ENCODE measurements at regions of chr16 and their contacts with region 1.

Region 1: GRCh38 chr16:75622761-75623605 is at the start of gene ADAT1:
- DNase-seq: peak; percentile 97
- ATAC-seq: peak; percentile 95 to 98
- H3K4me3 ChIP-seq: peak within 1 kb of the TSS; percentile 71 to 86 (median 78)
- H3K27ac ChIP-seq: peak within 1 kb of the TSS; percentile 86 to 93 (median 90)
- H3K4me1 ChIP-seq: peaks cover 19 to 20% of the 10 kb centered on the region in 2 donors
- H3K27me3 ChIP-seq: no peaks in the 10 kb centered on the region
- CTCF ChIP-seq: peak in 1 of 5 experiments; percentile 3
- POLR2A ChIP-seq: peak; percentile 85 to 86
- total RNA-seq, gene ADAT1: 14.7 to 44.8 (median 19.0) TPM

Region 2: DNA sequence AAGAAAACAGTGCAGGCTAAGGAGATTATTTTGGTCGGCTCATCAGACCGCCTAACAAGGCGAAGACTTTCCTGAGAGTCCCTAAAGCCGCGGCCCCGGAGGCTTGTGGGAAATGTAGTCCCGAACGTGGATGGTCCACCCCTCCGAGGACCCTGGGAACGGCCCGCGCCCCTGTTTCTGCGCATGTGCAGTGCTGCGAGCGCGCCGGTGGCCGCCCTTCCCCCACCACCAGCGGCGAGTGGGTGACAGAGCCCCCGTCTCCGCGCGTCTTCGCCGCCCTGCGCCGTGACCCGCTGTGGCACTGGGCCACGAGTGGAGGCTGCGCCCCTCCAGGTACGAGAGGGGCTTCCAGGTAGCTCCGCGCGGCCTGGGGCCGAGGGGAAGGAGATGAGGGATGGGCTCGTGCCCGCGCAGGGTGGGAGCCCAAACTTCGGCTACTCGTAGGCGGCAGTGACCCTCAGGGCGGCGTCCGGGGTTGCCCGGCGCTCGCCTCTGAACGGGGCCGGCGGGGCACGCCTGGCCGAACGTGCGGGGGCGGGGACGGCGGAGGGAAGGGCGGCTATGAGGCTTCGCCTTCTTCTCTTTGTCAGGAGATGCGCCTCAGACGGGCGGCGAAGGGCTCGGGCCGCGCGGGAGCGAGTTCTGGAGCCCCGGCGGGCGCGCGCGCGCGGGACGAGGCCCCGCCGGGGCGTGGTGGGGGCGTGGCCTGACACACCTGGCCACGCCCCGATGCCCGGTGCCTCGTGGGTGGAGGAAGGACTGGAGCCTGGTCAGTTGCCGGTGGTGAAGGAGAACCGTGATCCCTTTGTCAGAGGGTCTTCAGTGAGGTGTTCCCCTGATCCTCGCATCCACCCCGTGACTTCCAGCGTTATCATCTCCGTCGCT is 474.4 kb before region 1 on chr16 and contains the start of gene ZFP1:
- in situ Hi-C with region 1: no loop called
- intact Hi-C with region 1: loop called (anchors 2 kb)
- DNase-seq: peak; percentile 92 to 95
- ATAC-seq: peak; percentile 97 to 98
- H3K4me3 ChIP-seq: peak within 1 kb of the TSS; percentile 80 to 100 (median 95)
- H3K27ac ChIP-seq: peak within 1 kb of the TSS; percentile 97 to 100 (median 98)
- H3K4me1 ChIP-seq: peaks cover 3 to 8% of the 10 kb centered on the region in 2 donors
- H3K27me3 ChIP-seq: no peaks in the 10 kb centered on the region
- CTCF ChIP-seq: no peak
- POLR2A ChIP-seq: peak; percentile 63 to 74
- total RNA-seq, gene ZFP1: 4.1 to 11.0 (median 6.5) TPM

Region 3: GRCh38 chr16:75519881-75520280 is 103.1 kb before region 1 on chr16:
- in situ Hi-C with region 1: no loop called
- intact Hi-C with region 1: loop called (anchors 1 kb)
- DNase-seq: no peak
- ATAC-seq: no peak
- H3K4me3 ChIP-seq: no peak overlapping the region
- H3K27ac ChIP-seq: no peak overlapping the region
- H3K4me1 ChIP-seq: peaks cover 0 to 6% of the 10 kb centered on the region in 2 donors
- H3K27me3 ChIP-seq: no peaks in the 10 kb centered on the region
- CTCF ChIP-seq: no peak
- POLR2A ChIP-seq: no peak

Region 4: DNA sequence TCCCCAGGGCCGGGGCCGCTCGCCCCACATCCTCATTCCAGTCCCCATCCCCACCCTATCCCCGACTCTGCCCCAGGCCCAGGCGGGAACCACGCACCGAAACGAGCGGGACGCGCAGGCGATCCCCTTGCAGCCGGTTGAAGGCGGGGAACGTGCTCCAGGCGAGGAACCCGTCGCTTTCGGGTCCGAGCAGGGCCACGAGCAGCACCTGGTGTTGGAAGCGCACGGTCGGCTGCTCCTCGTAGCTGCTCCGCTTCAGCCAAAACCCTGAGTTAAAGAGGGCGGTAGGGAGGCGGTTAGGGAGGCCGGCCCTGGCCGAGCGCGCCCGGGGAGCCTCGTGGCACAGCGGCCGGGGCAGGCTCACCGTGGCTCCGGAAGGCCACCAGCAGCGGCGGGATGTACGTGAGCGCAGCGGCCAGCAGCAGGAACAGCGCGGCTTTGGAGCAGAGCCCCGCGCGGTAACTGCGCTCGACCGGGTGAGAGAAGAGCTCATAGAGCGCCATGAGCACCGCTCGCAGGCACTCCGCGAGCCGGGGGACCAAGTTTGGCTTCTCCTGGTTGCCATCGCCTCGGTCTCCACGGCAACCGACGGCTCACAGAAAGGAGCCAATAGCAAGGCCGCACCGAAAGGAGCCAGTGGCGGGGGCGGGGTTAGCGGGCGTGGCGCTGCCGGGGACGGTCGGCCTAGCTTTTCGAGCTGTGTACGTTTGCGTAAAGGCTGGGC is 67.1 kb before region 1 on chr16 and contains the start of gene TMEM231:
- in situ Hi-C with region 1: loop called in 1 of 4 experiments (anchors 10 kb)
- intact Hi-C with region 1: loop called (anchors 2 kb)
- DNase-seq: peak; percentile 95
- ATAC-seq: peak; percentile 93
- H3K4me3 ChIP-seq: peak within 1 kb of the TSS; percentile 76 to 84 (median 82)
- H3K27ac ChIP-seq: peak within 1 kb of the TSS; percentile 76 to 87 (median 82)
- H3K4me1 ChIP-seq: peaks cover 8 to 14% of the 10 kb centered on the region in 2 donors
- H3K27me3 ChIP-seq: no peaks in the 10 kb centered on the region
- CTCF ChIP-seq: no peak
- POLR2A ChIP-seq: peak; percentile 39 to 52
- total RNA-seq, gene TMEM231: 0.76 to 2.3 (median 1.7) TPM

Region 5: GRCh38 chr16:75566040-75566810 is 56.8 kb before region 1 on chr16 and contains the start of gene GABARAPL2:
- in situ Hi-C with region 1: loop called in 1 of 4 experiments (anchors 10 kb)
- intact Hi-C with region 1: loop called (anchors 2 kb)
- DNase-seq: peak; percentile 51 to 65
- ATAC-seq: peak; percentile 91 to 95
- H3K4me3 ChIP-seq: peak within 1 kb of the TSS; percentile 89 to 98 (median 96)
- H3K27ac ChIP-seq: peak within 1 kb of the TSS; percentile 81 to 92 (median 86)
- H3K4me1 ChIP-seq: peaks cover 34 to 54% of the 10 kb centered on the region in 2 donors
- H3K27me3 ChIP-seq: no peaks in the 10 kb centered on the region
- CTCF ChIP-seq: no peak
- POLR2A ChIP-seq: peak; percentile 90 to 91
- total RNA-seq, gene GABARAPL2: 92.2 to 137 (median 117) TPM

Region 6: DNA sequence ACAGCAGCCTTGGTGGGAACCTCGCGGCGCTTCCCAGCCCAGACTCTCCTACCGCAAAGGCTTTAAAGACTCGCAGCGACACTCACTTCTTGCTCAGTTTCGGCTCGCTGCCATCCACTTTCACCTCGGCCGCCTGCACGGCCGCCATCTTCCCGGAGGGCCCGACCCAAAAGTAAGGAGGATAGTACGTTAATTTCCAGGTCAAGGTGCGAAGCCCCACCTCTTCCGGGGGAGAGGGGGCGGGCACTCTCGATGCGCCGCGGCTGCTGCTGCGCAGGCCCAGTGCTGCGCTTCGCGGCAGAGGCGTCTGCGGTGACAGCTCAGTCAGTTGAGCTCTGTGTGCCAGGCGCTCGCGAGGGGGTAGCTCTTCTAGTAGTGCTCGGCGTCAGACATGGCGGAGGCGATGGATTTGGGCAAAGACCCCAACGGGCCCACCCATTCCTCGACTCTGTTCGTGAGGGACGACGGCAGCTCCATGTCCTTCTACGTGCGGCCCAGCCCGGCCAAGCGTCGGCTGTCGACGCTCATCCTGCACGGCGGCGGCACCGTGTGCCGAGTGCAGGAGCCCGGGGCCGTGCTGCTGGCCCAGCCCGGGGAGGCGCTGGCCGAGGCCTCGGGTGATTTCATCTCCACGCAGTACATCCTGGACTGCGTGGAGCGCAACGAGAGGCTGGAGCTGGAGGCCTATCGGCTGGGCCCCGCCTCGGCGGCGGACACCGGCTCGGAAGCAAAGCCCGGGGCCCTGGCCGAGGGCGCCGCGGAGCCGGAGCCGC is 24.7 kb after region 1 on chr16 and contains the starts of genes KARS1 and TERF2IP:
- in situ Hi-C with region 1: no loop called
- intact Hi-C with region 1: loop called (anchors 1 kb)
- DNase-seq: peak; percentile 93 to 94
- ATAC-seq: peak; percentile 92
- H3K4me3 ChIP-seq: peak within 1 kb of the TSS; percentile 85 to 99 (median 92)
- H3K27ac ChIP-seq: peak within 1 kb of the TSS; percentile 95 to 98 (median 97)
- H3K4me1 ChIP-seq: peaks cover 58 to 59% of the 10 kb centered on the region in 2 donors
- H3K27me3 ChIP-seq: no peaks in the 10 kb centered on the region
- CTCF ChIP-seq: no peak
- POLR2A ChIP-seq: peak; percentile 97
- total RNA-seq, gene KARS1: 183 to 251 (median 206) TPM
- total RNA-seq, gene TERF2IP: 44.5 to 73.6 (median 69.7) TPM

Region 7: DNA sequence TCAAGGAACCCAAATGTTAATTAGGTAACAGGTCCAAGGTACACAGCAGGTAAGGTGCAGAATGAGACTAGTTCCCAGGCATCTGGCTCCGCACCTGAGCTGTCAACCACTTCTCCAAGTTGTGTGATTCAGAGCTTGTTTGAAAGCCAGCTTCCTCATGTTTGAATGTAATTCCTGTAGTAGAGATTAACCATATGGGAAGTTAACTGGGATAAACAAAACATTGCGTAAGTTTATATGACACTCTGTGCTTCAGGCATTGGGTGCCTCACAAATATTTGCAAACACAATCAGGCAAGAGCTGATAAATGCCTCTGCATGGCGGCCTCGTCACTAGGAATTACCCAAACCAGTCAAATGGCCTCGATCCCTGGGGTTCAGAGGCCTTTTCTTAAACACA is 131.2 kb after region 1 on chr16:
- in situ Hi-C with region 1: no loop called
- intact Hi-C with region 1: no loop called
- DNase-seq: no peak
- ATAC-seq: no peak
- H3K4me3 ChIP-seq: no peak overlapping the region
- H3K27ac ChIP-seq: no peak overlapping the region
- H3K4me1 ChIP-seq: no peaks in the 10 kb centered on the region
- H3K27me3 ChIP-seq: no peaks in the 10 kb centered on the region
- CTCF ChIP-seq: no peak
- POLR2A ChIP-seq: no peak

Region 8: DNA sequence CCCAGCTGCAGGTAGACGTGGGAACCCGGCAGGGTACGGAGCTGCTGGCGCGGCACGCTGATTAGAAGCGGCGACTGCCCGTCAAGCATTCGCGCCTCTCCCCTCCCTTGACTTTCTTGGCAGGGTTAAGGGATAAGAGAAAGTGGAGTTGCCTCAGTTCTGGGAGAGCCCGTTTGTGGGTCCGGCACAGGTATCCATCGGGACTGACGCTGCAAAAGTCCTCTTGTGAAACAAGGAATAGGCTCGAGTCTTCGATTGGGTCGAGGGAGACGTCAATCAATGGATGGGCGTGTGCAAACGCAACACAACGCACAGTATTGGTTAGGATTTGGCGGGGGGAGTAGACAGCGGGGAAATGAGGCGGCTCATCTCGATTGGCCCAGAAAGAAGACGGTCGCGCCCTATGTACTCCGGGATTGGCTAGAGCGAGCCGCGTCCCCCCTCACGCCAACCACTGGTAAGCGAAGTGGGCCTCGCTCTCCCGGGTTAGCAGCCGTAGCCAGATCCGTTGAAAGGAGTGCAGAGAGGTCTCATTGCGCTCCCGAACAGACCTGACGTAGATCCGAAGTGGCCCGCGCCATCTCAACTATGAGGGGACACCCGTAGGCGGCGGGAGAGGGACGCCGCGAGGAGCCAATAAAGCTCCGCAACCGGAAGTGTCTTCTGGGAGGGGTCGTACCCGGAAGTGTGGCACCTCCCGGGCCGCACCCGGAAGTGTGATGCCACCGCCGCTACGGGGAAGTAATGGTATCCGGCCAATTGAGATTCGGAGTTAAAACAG is 1567.7 kb after region 1 on chr16 and contains the start of gene MON1B:
- in situ Hi-C with region 1: loop called in 1 of 4 experiments (anchors 25 kb)
- intact Hi-C with region 1: no loop called
- DNase-seq: peak; percentile 98 to 99
- ATAC-seq: peak; percentile 98
- H3K4me3 ChIP-seq: peak within 1 kb of the TSS; percentile 80 to 93 (median 90)
- H3K27ac ChIP-seq: peak within 1 kb of the TSS; percentile 93 to 96 (median 95)
- H3K4me1 ChIP-seq: peaks cover 12 to 15% of the 10 kb centered on the region in 2 donors
- H3K27me3 ChIP-seq: no peaks in the 10 kb centered on the region
- CTCF ChIP-seq: no peak
- POLR2A ChIP-seq: peak; percentile 48 to 72
- total RNA-seq, gene MON1B: 6.6 to 14.6 (median 10.6) TPM

Measured in gastrocnemius medialis (tissue), 4 donors.